Aorta (tissue), 5 donors: ENCODE measurements at regions of chr11 and their contacts with region 1.

Region 1: GRCh38 chr11:19816040-19816439 is 103.4 kb downstream of the NAV2 start:
- DNase-seq: peak; percentile 78 to 83
- ATAC-seq: peak; percentile 83
- H3K4me3 ChIP-seq: no peak overlapping the region
- H3K27ac ChIP-seq: peak overlapping the region in 1 of 2 donors; percentile 93
- H3K4me1 ChIP-seq: peaks cover 13 to 36% of the 10 kb centered on the region in 2 donors
- H3K27me3 ChIP-seq: no peaks in the 10 kb centered on the region

Region 2: GRCh38 chr11:19763330-19763729 is 52.7 kb before region 1 on chr11:
- intact Hi-C with region 1: loop called in 1 of 2 experiments (anchors 5 kb)
- DNase-seq: no peak
- ATAC-seq: no peak
- H3K4me3 ChIP-seq: no peak overlapping the region
- H3K27ac ChIP-seq: peak overlapping the region; percentile 22 to 42
- H3K4me1 ChIP-seq: peaks cover 10 to 26% of the 10 kb centered on the region in 2 donors
- H3K27me3 ChIP-seq: no peaks in the 10 kb centered on the region

Region 3: DNA sequence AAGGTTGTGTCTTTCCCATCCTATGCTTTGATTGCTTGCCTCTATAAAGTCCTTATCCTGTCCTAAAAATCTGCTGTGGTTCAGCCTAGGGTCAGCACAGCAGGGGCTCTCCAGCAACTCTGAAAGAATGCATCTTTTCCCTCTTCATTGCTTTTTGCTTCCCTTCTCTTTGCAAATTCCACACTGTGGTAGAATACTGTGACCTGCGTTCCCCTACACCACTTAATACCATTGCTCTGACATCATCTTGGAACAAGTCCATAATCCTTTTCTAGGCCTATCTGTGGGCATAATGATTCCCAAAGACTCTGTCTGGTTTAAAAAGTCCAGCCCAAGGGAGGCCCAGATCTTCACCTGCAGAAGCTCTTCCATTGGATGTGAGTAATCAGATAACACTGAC is 74.3 kb after region 1 on chr11:
- intact Hi-C with region 1: loop called in 1 of 2 experiments (anchors 5 kb)
- DNase-seq: no peak
- ATAC-seq: no peak
- H3K4me3 ChIP-seq: no peak overlapping the region
- H3K27ac ChIP-seq: peak overlapping the region; percentile 60 to 78
- H3K4me1 ChIP-seq: peaks cover 4 to 13% of the 10 kb centered on the region in 2 donors
- H3K27me3 ChIP-seq: no peaks in the 10 kb centered on the region